H1 (cell line): ENCODE measurements at regions of chr5 and their contacts with region 1.

Region 1: GRCh38 chr5:10741661-10742060 is 19.4 kb downstream of the DAP start:
- DNase-seq: no peak
- H3K4me3 ChIP-seq: no peak overlapping the region
- H3K27ac ChIP-seq: no peak overlapping the region
- H3K4me1 ChIP-seq: no peaks in the 10 kb centered on the region
- H3K27me3 ChIP-seq: no peaks in the 10 kb centered on the region
- CTCF ChIP-seq: peak in 1 of 3 experiments; percentile 27; a peak in 1 of 4 replicates
- EP300 ChIP-seq: no peak
- POLR2A ChIP-seq: no peak
- RAD21 ChIP-seq: peak; percentile 7 to 29; a peak in 1 of 4 replicates

Region 2: DNA sequence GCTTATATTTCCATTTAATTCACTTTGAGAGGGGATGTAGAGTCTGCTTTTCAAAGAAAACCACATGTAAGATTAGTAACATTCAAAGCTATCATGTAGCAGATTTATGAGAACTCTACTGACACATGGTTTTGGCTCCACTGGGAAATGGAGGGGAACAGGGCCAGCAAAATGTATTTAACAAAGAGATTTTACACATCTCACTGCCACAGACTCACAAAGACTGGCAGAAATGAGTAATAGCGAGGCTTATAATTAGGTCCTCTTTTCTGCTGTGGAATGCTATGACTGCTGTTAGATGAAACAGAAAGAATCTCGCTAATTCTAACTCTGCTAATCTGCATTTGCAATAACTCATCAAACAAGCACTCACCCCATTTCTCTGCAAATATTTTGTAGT is 14.9 kb after region 1 on chr5:
- CTCF ChIA-PET with region 1: interaction called, 13 read pairs
- POLR2A ChIA-PET with region 1: no interaction called
- DNase-seq: no peak
- H3K4me3 ChIP-seq: no peak overlapping the region
- H3K27ac ChIP-seq: no peak overlapping the region
- H3K4me1 ChIP-seq: peaks cover 2 to 5% (median 3%) of the 10 kb centered on the region in 4 experiments; a peak in 4 of 7 replicates
- H3K27me3 ChIP-seq: no peaks in the 10 kb centered on the region
- CTCF ChIP-seq: no peak
- EP300 ChIP-seq: no peak
- POLR2A ChIP-seq: no peak
- RAD21 ChIP-seq: no peak

Region 3: DNA sequence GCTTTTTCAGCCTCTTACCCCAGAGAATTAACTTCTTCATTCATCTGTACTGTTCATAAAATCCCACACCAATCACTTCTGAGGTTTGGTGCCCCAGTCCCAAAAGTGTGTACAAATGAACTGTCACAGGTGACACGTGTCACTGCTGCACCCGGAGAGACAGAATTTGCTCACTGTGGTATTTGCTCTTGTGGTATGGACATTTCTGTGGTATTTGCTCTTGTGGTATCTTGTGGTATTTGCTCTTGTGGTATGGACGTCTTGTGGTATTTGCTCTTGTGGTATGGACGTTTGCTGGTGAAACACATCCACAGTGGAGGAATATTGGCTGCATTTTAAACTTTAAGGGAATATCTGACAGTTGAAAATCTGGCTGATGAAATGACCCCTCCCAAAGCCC is 234.3 kb after region 1 on chr5:
- CTCF ChIA-PET with region 1: no interaction called
- POLR2A ChIA-PET with region 1: no interaction called
- DNase-seq: no peak
- H3K4me3 ChIP-seq: no peak overlapping the region
- H3K27ac ChIP-seq: no peak overlapping the region
- H3K4me1 ChIP-seq: no peaks in the 10 kb centered on the region
- H3K27me3 ChIP-seq: no peaks in the 10 kb centered on the region
- CTCF ChIP-seq: no peak
- EP300 ChIP-seq: no peak
- POLR2A ChIP-seq: no peak
- RAD21 ChIP-seq: no peak

Region 4: DNA sequence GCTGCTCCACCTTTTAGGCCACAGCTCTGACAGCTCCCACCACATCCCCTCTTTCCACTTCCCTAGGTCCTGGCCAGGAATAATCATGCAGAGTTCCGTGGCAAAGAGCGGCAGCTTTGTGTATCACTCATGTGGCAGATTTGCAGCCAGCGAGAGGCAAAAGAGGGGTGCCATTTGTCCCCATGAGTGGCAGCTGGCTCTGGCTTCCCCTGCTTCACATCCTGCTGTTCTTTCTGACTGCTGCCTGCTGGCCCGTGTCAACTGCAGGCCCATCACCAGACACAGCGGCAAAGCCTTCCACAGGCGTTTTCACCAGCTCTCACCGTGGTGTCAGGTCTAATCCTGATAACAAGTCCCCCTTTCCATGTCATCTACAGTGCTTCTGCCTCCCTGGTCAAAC is 450.0 kb after region 1 on chr5:
- CTCF ChIA-PET with region 1: no interaction called
- POLR2A ChIA-PET with region 1: no interaction called
- DNase-seq: no peak
- H3K4me3 ChIP-seq: no peak overlapping the region
- H3K27ac ChIP-seq: no peak overlapping the region
- H3K4me1 ChIP-seq: no peaks in the 10 kb centered on the region
- H3K27me3 ChIP-seq: no peaks in the 10 kb centered on the region
- CTCF ChIP-seq: no peak
- EP300 ChIP-seq: no peak
- POLR2A ChIP-seq: no peak
- RAD21 ChIP-seq: no peak